ENCODE measurements at regions of chr4 and their contacts with region 1.

Region 1: DNA sequence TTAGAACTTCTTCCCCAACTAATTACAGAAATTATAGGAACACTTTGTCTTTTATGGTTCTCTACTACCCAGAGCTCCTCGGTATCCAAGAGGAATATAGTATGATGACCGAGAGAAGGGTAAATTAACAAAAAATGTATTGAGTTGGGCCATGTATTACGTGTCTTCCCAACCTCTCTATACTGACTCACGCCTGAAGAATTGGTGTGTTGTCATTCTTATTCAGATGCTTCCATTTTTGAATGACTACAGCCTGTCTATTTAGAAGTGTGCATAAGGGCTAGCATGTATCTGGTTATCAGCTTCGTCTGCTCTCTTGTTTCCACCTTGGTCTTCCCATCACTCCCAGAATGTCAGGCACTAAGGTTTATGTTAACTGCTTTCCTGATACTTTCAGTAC is 24.5 kb upstream of the SCD5 start:
- DNase-seq: no peak
- ATAC-seq: no peak
- H3K4me3 ChIP-seq: no peak overlapping the region
- H3K27ac ChIP-seq: no peak overlapping the region
- H3K4me1 ChIP-seq: no peaks in the 10 kb centered on the region
- H3K27me3 ChIP-seq: no peaks in the 10 kb centered on the region

Region 2: DNA sequence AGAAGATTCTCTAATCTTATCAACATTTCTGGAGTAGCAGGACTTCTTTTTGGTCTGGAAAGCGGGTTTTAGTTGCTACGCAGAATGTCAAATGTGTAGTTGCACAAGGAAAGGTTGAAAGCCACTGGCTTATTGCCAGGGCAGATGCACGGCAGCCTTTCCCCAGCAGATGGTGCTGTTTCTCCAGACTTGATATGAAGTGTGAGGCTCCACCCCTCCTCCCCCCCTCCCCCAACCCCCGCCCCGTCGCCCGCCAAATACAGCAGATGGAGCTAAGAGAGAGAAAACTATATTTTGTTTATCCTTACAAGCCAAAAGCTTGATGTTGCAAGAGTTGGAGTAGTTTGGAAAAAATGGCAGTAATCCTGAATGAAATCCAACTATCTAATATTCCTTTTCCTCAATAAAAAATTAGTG is 360.6 kb before region 1 on chr4:
- intact Hi-C with region 1: no loop called
- DNase-seq: peak; percentile 82 to 92
- ATAC-seq: peak; percentile 94
- H3K4me3 ChIP-seq: no peak overlapping the region
- H3K27ac ChIP-seq: no peak overlapping the region
- H3K4me1 ChIP-seq: no peaks in the 10 kb centered on the region
- H3K27me3 ChIP-seq: no peaks in the 10 kb centered on the region

Region 3: DNA sequence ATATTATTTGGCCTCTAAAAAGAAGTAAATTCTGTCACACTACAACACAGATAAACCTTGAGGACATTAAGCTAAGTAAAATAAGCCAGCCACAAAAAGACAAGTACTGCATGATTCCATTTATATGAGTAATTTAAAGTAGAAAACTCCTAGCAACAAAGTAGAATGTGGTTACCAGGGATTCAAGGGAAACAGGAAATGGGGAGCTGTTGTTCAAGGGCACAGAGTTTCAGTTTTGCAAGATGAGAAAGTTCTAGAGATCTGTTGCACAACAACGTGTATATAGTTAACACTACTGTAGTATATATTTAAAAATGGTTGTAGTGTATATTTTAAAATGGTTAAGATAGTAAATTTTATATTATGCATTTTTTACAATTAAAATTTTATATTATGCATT is 42.5 kb after region 1 on chr4:
- intact Hi-C with region 1: loop called in 1 of 2 experiments (anchors 10 kb)
- DNase-seq: no peak
- ATAC-seq: no peak
- H3K4me3 ChIP-seq: no peak overlapping the region
- H3K27ac ChIP-seq: no peak overlapping the region
- H3K4me1 ChIP-seq: no peaks in the 10 kb centered on the region
- H3K27me3 ChIP-seq: no peaks in the 10 kb centered on the region

Region 4: DNA sequence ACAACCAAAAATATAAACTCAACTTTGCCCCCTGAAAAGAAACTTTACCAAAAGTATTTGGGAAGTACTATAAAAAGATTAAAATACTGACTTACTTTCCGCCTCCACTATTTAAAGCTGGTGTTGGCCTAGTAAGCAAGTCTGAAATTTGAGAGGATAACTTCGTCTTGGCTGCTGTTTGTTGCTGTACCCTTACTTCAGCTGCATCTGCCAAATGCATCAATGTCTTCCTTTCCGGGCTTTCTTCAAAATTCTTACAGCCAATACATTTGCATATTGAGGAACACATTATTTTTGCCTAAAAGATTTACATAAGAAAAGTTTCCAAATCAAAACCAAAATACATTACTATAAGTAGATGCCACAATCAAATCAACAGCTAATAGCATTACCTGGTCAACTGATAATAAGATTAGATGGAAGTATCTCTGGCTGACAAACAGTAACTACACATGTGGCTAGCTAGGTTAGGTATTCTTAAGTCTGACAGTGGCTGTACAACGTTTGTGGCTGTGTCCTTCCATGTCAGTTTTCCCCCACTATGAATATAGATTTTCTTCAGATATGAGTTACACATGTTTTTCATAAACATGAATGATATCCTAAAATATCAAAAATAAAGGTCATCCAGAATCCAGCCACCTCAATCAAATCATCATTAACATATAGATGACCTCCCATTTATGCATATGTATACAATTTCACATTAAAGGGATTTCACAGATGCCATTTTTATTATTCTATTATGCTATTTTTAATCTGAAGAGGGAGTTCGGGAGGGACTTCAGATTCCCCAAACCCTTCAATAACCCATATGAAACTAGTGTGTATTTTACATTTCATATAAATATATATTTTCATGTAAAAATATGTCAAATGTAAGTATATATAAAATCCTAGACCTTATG is 108.0 kb after region 1 on chr4:
- intact Hi-C with region 1: no loop called
- DNase-seq: no peak
- ATAC-seq: no peak
- H3K4me3 ChIP-seq: no peak overlapping the region
- H3K27ac ChIP-seq: no peak overlapping the region
- H3K4me1 ChIP-seq: no peaks in the 10 kb centered on the region
- H3K27me3 ChIP-seq: no peaks in the 10 kb centered on the region

Measured in aorta (tissue), 5 donors.